ENCODE measurements at regions of chr22 and their contacts with region 1.

Region 1: GRCh38 chr22:21020802-21021429 is 6.0 kb downstream of the P2RX6 start:
- DNase-seq: peak; percentile 68
- ATAC-seq: peak; percentile 95
- H3K4me3 Mint-ChIP-seq: no peak overlapping the region
- H3K27ac Mint-ChIP-seq: no peak overlapping the region
- H3K4me1 Mint-ChIP-seq: no peaks in the 10 kb centered on the region
- H3K27me3 Mint-ChIP-seq: peaks cover 14% of the 10 kb centered on the region
- CTCF ChIP-seq: peak; percentile 52; the same call in 1 of the 2 replicates

Region 2: GRCh38 chr22:20840646-20841371 is 180.1 kb before region 1 on chr22:
- CTCF ChIA-PET with region 1: no interaction called
- POLR2A ChIA-PET with region 1: no interaction called
- DNase-seq: no peak
- ATAC-seq: peak; percentile 52
- H3K4me3 Mint-ChIP-seq: no peak overlapping the region
- H3K27ac Mint-ChIP-seq: peak overlapping the region; percentile 19; the same call in 1 of the 2 replicates
- H3K4me1 Mint-ChIP-seq: peaks cover 33% of the 10 kb centered on the region
- H3K27me3 Mint-ChIP-seq: no peaks in the 10 kb centered on the region
- CTCF ChIP-seq: no peak

Region 3: DNA sequence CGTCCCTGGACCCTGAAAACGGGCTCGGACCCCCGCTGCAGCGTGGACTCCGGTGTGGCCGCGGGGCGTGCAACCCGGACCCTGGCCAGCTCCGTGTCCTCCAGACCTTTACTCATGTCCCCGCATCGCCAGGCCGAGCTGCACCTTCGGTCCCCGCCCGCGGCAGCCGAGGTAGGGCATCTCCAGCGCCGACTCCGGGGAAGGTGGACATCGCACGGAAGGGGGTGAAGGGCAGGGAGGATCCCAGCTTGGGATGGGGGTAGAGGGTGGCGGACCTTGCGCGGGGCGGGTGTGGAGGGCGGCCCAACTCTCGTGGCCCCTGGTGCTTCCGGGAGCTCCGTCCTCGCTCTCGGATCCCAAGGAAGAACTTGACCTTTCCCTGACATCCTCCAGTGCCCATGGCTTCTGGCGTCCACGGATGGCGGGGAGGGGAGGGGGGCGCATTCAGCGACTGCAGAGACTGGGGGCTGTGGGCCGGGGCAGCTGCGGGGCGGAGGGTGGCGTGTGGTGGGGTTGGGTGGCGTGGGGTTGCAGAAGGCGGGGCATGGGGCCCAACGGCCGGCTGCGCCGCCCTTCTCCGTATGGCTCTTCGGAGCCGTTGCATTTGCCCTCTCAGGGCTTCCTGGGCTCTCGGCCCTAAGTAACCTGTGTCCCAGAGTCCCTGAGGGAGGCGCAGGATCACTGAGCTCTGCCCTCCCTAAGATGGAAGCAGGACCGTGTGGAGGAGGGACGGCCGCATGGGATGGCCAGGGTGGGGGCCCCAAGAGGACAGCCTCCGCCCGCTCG is 63.4 kb before region 1 on chr22:
- CTCF ChIA-PET with region 1: interaction called, 14 read pairs
- POLR2A ChIA-PET with region 1: no interaction called
- DNase-seq: peak; percentile 58
- ATAC-seq: peak; percentile 74
- H3K4me3 Mint-ChIP-seq: peak overlapping the region; percentile 74
- H3K27ac Mint-ChIP-seq: no peak overlapping the region
- H3K4me1 Mint-ChIP-seq: peaks cover 12% of the 10 kb centered on the region
- H3K27me3 Mint-ChIP-seq: peaks cover 18% of the 10 kb centered on the region
- CTCF ChIP-seq: no peak

Region 4: GRCh38 chr22:21001560-21002325 is 19.2 kb before region 1 on chr22 and contains the start of gene THAP7:
- CTCF ChIA-PET with region 1: interaction called, 19 read pairs
- POLR2A ChIA-PET with region 1: no interaction called
- DNase-seq: peak; percentile 94
- ATAC-seq: peak; percentile 87
- H3K4me3 Mint-ChIP-seq: peak within 1 kb of the TSS; percentile 87
- H3K27ac Mint-ChIP-seq: peak within 1 kb of the TSS; percentile 97
- H3K4me1 Mint-ChIP-seq: peaks cover 18% of the 10 kb centered on the region
- H3K27me3 Mint-ChIP-seq: no peaks in the 10 kb centered on the region
- CTCF ChIP-seq: no peak
- total RNA-seq, gene THAP7: 18.7 to 23.9 TPM (median 19.3 TPM) in 3 replicates

Region 5: DNA sequence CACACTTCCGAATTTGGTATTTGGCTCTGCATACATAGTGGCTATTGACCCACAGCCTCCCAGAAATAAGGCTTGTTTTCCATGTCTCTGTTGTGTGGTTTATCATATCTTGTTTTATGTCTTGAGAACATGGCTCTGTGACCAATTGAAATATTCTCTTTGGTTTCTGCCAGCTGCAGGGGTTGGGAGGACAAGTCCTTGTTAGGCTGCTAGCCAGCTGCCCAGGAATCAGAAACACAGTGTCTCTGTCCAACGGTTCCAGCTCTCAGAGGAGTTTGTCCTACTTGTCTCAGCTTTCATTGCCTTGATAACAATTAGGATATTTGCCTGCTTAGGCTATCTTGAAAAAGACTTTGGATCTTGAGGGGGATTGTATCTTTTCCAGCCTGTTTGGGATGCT is 17.5 kb after region 1 on chr22:
- CTCF ChIA-PET with region 1: interaction called, 11 read pairs
- POLR2A ChIA-PET with region 1: interaction called, 10 read pairs
- DNase-seq: no peak
- ATAC-seq: no peak
- H3K4me3 Mint-ChIP-seq: no peak overlapping the region
- H3K27ac Mint-ChIP-seq: no peak overlapping the region
- H3K4me1 Mint-ChIP-seq: no peaks in the 10 kb centered on the region
- H3K27me3 Mint-ChIP-seq: peaks cover 11% of the 10 kb centered on the region
- CTCF ChIP-seq: no peak

Region 6: DNA sequence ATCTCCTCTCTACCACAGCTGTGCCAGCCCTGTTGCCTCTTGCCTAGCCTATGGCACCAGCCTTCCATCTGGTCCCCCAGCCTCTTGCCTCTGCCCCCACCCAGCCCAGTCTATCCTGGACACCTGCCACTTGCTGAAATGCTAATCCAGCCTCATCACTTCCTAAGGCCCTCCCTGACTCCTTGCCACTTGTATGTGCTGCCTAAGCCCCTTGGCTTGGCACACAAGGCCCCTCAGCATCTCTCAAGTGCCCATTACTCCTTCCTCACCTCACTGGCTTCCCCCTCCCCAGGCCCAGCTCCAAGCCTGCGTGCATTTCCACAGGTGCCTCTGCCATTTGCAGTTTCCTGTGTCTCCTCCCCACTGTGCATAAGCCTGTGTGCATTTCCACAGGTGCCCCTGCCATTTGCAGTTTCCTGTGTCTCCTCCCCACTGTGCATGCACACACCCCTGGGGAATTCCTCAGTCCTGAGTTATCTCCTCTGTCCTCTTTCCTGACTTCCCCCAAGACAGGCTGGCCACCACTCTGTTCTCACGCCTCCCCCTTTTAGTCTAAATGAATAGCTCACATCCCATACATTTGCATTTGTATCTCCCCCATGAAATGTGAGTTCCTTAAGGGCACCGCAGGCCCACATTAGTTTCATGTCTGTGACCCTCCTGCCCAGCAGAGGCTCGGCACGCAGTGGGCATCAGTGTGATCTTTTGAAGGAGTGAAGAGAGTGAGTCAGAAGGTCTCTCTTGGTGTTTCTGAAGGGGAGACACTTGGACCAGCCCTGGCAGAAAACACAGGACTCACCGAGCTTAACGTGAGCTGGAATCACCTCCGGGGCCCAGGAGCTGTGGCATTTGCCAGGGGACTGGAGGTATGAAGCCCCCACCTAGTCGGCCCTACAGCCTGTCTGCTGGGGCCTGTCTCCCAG is 30.8 kb after region 1 on chr22:
- CTCF ChIA-PET with region 1: interaction called, 12 read pairs
- POLR2A ChIA-PET with region 1: no interaction called
- DNase-seq: no peak
- ATAC-seq: peak; percentile 54
- H3K4me3 Mint-ChIP-seq: peak overlapping the region; percentile 29; the same call in 1 of the 2 replicates
- H3K27ac Mint-ChIP-seq: peak overlapping the region; percentile 76
- H3K4me1 Mint-ChIP-seq: peaks cover 38% of the 10 kb centered on the region
- H3K27me3 Mint-ChIP-seq: no peaks in the 10 kb centered on the region; the same call in 1 of the 2 replicates
- CTCF ChIP-seq: no peak

Region 7: GRCh38 chr22:21102659-21103267 is 81.8 kb after region 1 on chr22:
- CTCF ChIA-PET with region 1: interaction called, 55 read pairs
- POLR2A ChIA-PET with region 1: no interaction called
- DNase-seq: peak; percentile 95
- ATAC-seq: peak; percentile 99
- H3K4me3 Mint-ChIP-seq: peak overlapping the region; percentile 51
- H3K27ac Mint-ChIP-seq: no peak overlapping the region
- H3K4me1 Mint-ChIP-seq: peaks cover 22% of the 10 kb centered on the region
- H3K27me3 Mint-ChIP-seq: peaks cover 21% of the 10 kb centered on the region
- CTCF ChIP-seq: peak; percentile 82

Measured in WTC11 (cell line).